Transverse colon (tissue), 4 donors: ENCODE measurements at regions of chr1 and their contacts with region 1.

Region 1: DNA sequence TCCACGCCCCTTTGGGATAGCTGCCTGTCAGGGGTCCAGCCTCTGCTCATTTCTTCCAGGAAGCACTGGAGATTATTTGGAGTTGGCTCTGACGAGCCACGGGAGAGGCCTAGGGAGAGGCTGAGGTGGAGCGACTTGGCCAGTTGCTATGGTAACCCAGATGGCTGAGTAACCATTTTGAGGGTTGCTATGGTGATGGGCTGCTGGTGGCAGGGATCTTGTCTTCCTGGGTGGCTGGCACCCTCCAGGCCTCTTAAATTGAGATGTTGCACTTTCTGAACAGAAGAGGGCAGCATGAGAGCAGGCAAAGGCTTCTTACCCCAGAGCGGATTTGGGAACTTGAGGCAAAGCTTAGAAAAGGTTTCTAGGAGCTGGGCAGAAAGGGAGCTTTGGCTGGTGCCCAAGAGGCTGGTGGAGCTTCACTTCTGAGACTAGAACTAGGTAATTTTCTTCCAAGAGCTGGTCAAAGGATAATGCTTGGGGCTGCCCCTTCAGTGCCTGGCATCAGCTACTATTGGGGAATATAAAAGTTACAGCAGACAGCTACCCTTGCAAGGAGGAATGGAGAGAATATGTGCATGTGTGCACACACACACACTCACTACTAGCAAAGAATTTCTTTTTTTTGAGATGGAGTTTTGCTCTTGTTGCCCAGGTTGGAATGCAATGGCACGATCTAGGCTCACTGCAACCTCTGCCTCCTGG is 72.5 kb downstream of the NDUFS5 start:
- DNase-seq: peak; percentile 56
- H3K4me3 ChIP-seq: no peak overlapping the region
- H3K27ac ChIP-seq: no peak overlapping the region
- H3K4me1 ChIP-seq: peaks cover 0 to 22% (median 4%) of the 10 kb centered on the region in 4 donors
- H3K27me3 ChIP-seq: no peaks in the 10 kb centered on the region
- CTCF ChIP-seq: peak; percentile 62 to 73 (median 70)
- EP300 ChIP-seq: no peak
- POLR2A ChIP-seq: no peak

Region 2: GRCh38 chr1:38527373-38527966 is 571.2 kb before region 1 on chr1:
- in situ Hi-C with region 1: no loop called
- intact Hi-C with region 1: no loop called
- DNase-seq: peak; percentile 56
- H3K4me3 ChIP-seq: no peak overlapping the region
- H3K27ac ChIP-seq: no peak overlapping the region
- H3K4me1 ChIP-seq: no peaks in the 10 kb centered on the region
- H3K27me3 ChIP-seq: peaks cover 34% of the 10 kb centered on the region
- CTCF ChIP-seq: no peak
- EP300 ChIP-seq: no peak
- POLR2A ChIP-seq: no peak

Region 3: GRCh38 chr1:39183503-39184353 is 85.0 kb after region 1 on chr1:
- in situ Hi-C with region 1: loop called in 3 of 4 experiments (anchors 5 to 10 kb)
- intact Hi-C with region 1: no loop called
- DNase-seq: peak; percentile 75
- H3K4me3 ChIP-seq: no peak overlapping the region
- H3K27ac ChIP-seq: peak overlapping the region; percentile 15 to 62 (median 52)
- H3K4me1 ChIP-seq: peaks cover 7 to 31% (median 22%) of the 10 kb centered on the region in 4 donors
- H3K27me3 ChIP-seq: no peaks in the 10 kb centered on the region
- CTCF ChIP-seq: peak; percentile 54 to 77 (median 55)
- EP300 ChIP-seq: no peak
- POLR2A ChIP-seq: no peak

Region 4: GRCh38 chr1:39189592-39190041 is 90.9 kb after region 1 on chr1:
- in situ Hi-C with region 1: loop called in 3 of 4 experiments (anchors 5 to 10 kb)
- intact Hi-C with region 1: no loop called
- DNase-seq: no peak
- H3K4me3 ChIP-seq: no peak overlapping the region
- H3K27ac ChIP-seq: peak overlapping the region; percentile 18 to 86 (median 42)
- H3K4me1 ChIP-seq: peaks cover 11 to 52% (median 23%) of the 10 kb centered on the region in 4 donors
- H3K27me3 ChIP-seq: no peaks in the 10 kb centered on the region
- CTCF ChIP-seq: no peak
- EP300 ChIP-seq: no peak
- POLR2A ChIP-seq: no peak

Region 5: GRCh38 chr1:39261712-39262221 is 163.1 kb after region 1 on chr1:
- in situ Hi-C with region 1: loop called (anchors 5 to 10 kb)
- intact Hi-C with region 1: no loop called
- DNase-seq: no peak
- H3K4me3 ChIP-seq: no peak overlapping the region
- H3K27ac ChIP-seq: peak overlapping the region in 2 of 4 donors; percentile 41 to 47
- H3K4me1 ChIP-seq: peaks cover 0 to 16% (median 2%) of the 10 kb centered on the region in 4 donors
- H3K27me3 ChIP-seq: no peaks in the 10 kb centered on the region
- CTCF ChIP-seq: no peak
- EP300 ChIP-seq: no peak
- POLR2A ChIP-seq: no peak

Region 6: DNA sequence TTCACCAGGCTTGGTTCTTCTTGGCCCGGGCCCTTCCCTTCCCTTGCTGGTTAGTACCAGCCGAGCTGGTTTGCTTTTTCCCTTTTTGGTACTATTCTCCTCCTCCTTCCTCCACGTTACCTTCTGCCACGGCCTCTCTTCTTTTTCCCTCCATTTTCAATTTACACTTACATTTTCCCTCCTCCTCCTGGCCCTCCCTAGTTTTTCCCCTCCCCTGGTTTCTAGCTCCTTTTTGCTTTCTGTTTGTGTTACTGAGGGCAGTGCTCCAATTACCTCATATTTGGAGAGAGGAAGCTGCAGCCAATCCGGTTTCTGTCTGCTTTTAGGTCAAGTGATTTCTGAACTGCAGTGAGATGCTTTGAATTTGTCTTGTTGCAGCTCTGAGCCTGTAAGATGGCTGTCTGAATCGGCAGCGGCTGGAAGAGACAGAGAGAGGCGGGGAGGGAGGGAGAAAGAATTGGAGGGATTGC is 169.4 kb after region 1 on chr1:
- in situ Hi-C with region 1: loop called (anchors 5 to 10 kb)
- intact Hi-C with region 1: no loop called
- DNase-seq: peak; percentile 20
- H3K4me3 ChIP-seq: peak overlapping the region; percentile 3 to 30 (median 9)
- H3K27ac ChIP-seq: peak overlapping the region; percentile 78 to 88 (median 84)
- H3K4me1 ChIP-seq: peaks cover 7 to 54% (median 27%) of the 10 kb centered on the region in 4 donors
- H3K27me3 ChIP-seq: no peaks in the 10 kb centered on the region
- CTCF ChIP-seq: no peak
- EP300 ChIP-seq: no peak
- POLR2A ChIP-seq: peak; percentile 39

Region 7: GRCh38 chr1:39410915-39411436 is 312.3 kb after region 1 on chr1:
- in situ Hi-C with region 1: no loop called
- intact Hi-C with region 1: loop called (anchors 10 kb)
- DNase-seq: peak; percentile 82
- H3K4me3 ChIP-seq: peak overlapping the region in 1 of 4 donors; percentile 73
- H3K27ac ChIP-seq: peak overlapping the region; percentile 80 to 97 (median 90)
- H3K4me1 ChIP-seq: peaks cover 22 to 66% (median 43%) of the 10 kb centered on the region in 4 donors
- H3K27me3 ChIP-seq: no peaks in the 10 kb centered on the region
- CTCF ChIP-seq: peak; percentile 59 to 81 (median 67)
- EP300 ChIP-seq: no peak
- POLR2A ChIP-seq: no peak

Region 8: GRCh38 chr1:39538588-39539465 is 440.1 kb after region 1 on chr1:
- in situ Hi-C with region 1: loop called in 3 of 4 experiments (anchors 10 to 25 kb)
- intact Hi-C with region 1: loop called (anchors 5 kb)
- DNase-seq: peak; percentile 76
- H3K4me3 ChIP-seq: no peak overlapping the region
- H3K27ac ChIP-seq: no peak overlapping the region
- H3K4me1 ChIP-seq: peaks cover 0 to 4% (median 0%) of the 10 kb centered on the region in 4 donors
- H3K27me3 ChIP-seq: no peaks in the 10 kb centered on the region
- CTCF ChIP-seq: peak; percentile 87 to 95 (median 91)
- EP300 ChIP-seq: no peak
- POLR2A ChIP-seq: no peak